CD8-positive, alpha-beta T cell (primary cell): ENCODE measurements at regions of chr17 and their contacts with region 1.

Region 1: GRCh38 chr17:42405963-42406495 is 17.0 kb downstream of the CAVIN1 start:
- DNase-seq: peak; percentile 72 to 90 (median 83)
- ATAC-seq: peak; percentile 78
- H3K4me3 ChIP-seq: no peak overlapping the region
- H3K4me3 Mint-ChIP-seq: no peak overlapping the region
- H3K27ac ChIP-seq: no peak overlapping the region
- H3K27ac Mint-ChIP-seq: no peak overlapping the region
- H3K4me1 ChIP-seq: peaks cover 14% of the 10 kb centered on the region
- H3K4me1 Mint-ChIP-seq: peaks cover 8% of the 10 kb centered on the region
- H3K27me3 ChIP-seq: no peaks in the 10 kb centered on the region
- H3K27me3 Mint-ChIP-seq: no peaks in the 10 kb centered on the region
- CTCF ChIP-seq: peak; percentile 91

Region 2: GRCh38 chr17:41919840-41920599 is 486.0 kb before region 1 on chr17:
- CTCF ChIA-PET with region 1: no interaction called
- POLR2A ChIA-PET with region 1: no interaction called
- intact Hi-C with region 1: no loop called
- DNase-seq: peak in 2 of 9 experiments; percentile 15 to 21
- ATAC-seq: no peak
- H3K4me3 ChIP-seq: no peak overlapping the region
- H3K4me3 Mint-ChIP-seq: peak overlapping the region; percentile 67
- H3K27ac ChIP-seq: no peak overlapping the region
- H3K27ac Mint-ChIP-seq: no peak overlapping the region
- H3K4me1 ChIP-seq: peaks cover 17% of the 10 kb centered on the region
- H3K4me1 Mint-ChIP-seq: peaks cover 23% of the 10 kb centered on the region
- H3K27me3 ChIP-seq: no peaks in the 10 kb centered on the region
- H3K27me3 Mint-ChIP-seq: no peaks in the 10 kb centered on the region
- CTCF ChIP-seq: no peak

Region 3: GRCh38 chr17:42153919-42154742 is 251.9 kb before region 1 on chr17:
- CTCF ChIA-PET with region 1: no interaction called
- POLR2A ChIA-PET with region 1: no interaction called
- intact Hi-C with region 1: loop called in 1 of 2 experiments (anchors 1 kb)
- DNase-seq: peak in 2 of 9 experiments; percentile 20 to 40
- ATAC-seq: no peak
- H3K4me3 ChIP-seq: peak overlapping the region; percentile 94 to 95
- H3K4me3 Mint-ChIP-seq: peak overlapping the region; percentile 98
- H3K27ac ChIP-seq: peak overlapping the region; percentile 78 to 87
- H3K27ac Mint-ChIP-seq: peak overlapping the region; percentile 95
- H3K4me1 ChIP-seq: peaks cover 24% of the 10 kb centered on the region
- H3K4me1 Mint-ChIP-seq: peaks cover 39% of the 10 kb centered on the region
- H3K27me3 ChIP-seq: no peaks in the 10 kb centered on the region
- H3K27me3 Mint-ChIP-seq: no peaks in the 10 kb centered on the region
- CTCF ChIP-seq: no peak

Region 4: DNA sequence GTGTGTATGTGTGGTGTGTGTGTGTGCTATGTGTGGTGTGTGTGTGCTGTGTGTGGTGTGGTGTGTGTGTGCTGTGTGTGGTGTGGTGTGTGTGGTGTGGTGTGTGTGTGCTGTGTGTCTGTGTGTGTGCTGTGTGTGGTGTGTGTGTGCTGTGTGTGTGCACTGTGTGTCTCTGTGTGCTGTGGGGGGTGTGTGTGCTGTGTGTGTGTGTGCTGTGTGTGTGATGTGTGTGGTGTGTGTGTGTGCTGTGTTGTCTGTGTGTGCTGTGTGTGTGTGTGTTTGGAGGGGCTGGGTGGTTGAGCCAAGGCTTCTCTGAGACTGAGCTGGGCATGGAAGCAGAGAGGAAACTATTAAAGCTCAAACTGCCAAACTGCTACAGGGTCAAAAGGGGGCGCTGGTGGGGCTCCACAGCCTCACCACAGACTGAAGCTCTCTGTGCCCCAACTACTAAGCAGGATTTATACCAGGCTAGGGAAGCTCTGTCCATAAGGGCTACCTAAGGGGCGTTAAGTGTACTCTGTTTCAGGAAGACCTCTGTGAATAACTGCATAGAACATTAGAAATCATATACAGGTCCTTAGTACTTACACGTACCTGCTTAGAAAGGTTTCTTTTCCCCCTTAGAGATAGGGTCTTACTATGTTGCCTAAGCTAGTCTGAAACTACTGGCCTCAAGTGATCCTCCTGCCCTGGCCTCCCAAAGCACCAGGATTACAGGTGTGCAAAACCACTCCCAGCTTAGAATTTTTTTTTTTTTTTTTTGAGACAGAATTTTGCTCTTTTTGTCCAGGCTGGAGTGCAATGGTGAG is 183.9 kb before region 1 on chr17:
- CTCF ChIA-PET with region 1: interaction called, 39 read pairs
- POLR2A ChIA-PET with region 1: interaction called, 4 read pairs
- intact Hi-C with region 1: loop called (anchors 1 to 2 kb)
- DNase-seq: peak; percentile 24 to 82 (median 66)
- ATAC-seq: peak; percentile 98
- H3K4me3 ChIP-seq: no peak overlapping the region
- H3K4me3 Mint-ChIP-seq: no peak overlapping the region
- H3K27ac ChIP-seq: no peak overlapping the region
- H3K27ac Mint-ChIP-seq: no peak overlapping the region
- H3K4me1 ChIP-seq: no peaks in the 10 kb centered on the region
- H3K4me1 Mint-ChIP-seq: peaks cover 5% of the 10 kb centered on the region
- H3K27me3 ChIP-seq: no peaks in the 10 kb centered on the region
- H3K27me3 Mint-ChIP-seq: no peaks in the 10 kb centered on the region
- CTCF ChIP-seq: peak; percentile 62

Region 5: GRCh38 chr17:42322382-42323267 is 83.4 kb before region 1 on chr17:
- CTCF ChIA-PET with region 1: interaction called, 672 read pairs
- POLR2A ChIA-PET with region 1: interaction called, 6 read pairs
- intact Hi-C with region 1: loop called (anchors 1 kb)
- DNase-seq: peak; percentile 89 to 98 (median 96)
- ATAC-seq: peak; percentile 97
- H3K4me3 ChIP-seq: no peak overlapping the region
- H3K4me3 Mint-ChIP-seq: no peak overlapping the region
- H3K27ac ChIP-seq: peak overlapping the region in 1 of 2 experiments; percentile 38
- H3K27ac Mint-ChIP-seq: peak overlapping the region; percentile 82
- H3K4me1 ChIP-seq: peaks cover 17% of the 10 kb centered on the region
- H3K4me1 Mint-ChIP-seq: peaks cover 40% of the 10 kb centered on the region
- H3K27me3 ChIP-seq: no peaks in the 10 kb centered on the region
- H3K27me3 Mint-ChIP-seq: no peaks in the 10 kb centered on the region
- CTCF ChIP-seq: peak; percentile 99

Region 6: DNA sequence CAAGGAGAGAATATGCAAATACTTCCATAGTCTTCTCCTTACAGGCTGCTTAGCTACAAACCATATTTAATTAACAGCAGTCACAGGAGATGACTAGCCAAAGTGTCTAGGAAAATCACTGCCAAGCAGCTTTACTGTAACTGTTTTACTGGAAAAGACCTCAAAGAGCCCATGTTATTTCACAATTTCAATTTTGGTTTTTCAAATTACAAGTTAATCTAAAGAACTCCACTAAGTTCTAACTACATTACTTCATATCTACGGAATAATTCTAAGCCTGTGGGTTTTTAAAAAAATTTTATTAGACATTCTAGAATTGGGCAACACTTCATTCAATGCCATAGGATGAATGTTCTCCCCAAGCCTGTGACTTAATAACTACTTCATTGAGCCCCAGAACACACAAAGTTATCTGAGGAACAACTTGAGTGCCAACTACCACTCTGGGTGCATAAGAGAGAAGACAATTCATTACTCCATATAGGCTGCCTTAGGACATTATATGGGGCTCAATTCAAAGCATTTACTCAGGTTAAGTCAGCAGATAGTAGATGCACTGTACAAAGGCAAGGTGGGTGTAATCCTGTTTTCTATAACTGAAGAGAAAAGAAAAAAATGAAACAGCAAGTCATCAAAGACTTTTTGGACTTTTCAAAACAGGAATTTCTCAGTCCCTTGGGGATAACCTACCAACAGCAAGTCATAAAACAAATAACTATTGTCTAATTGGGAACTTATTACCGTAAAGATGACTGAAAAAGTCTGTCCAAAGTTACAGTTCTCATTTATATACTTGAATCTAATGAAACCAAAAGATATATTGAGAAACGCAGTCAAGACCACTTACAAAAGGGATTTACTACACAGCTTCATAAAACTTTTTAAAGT is 50.8 kb before region 1 on chr17:
- CTCF ChIA-PET with region 1: interaction called, 6 read pairs
- POLR2A ChIA-PET with region 1: no interaction called
- intact Hi-C with region 1: loop called in 1 of 2 experiments (anchors 5 kb)
- DNase-seq: no peak
- ATAC-seq: no peak
- H3K4me3 ChIP-seq: no peak overlapping the region
- H3K4me3 Mint-ChIP-seq: no peak overlapping the region
- H3K27ac ChIP-seq: no peak overlapping the region
- H3K27ac Mint-ChIP-seq: no peak overlapping the region
- H3K4me1 ChIP-seq: peaks cover 15% of the 10 kb centered on the region
- H3K4me1 Mint-ChIP-seq: peaks cover 43% of the 10 kb centered on the region
- H3K27me3 ChIP-seq: no peaks in the 10 kb centered on the region
- H3K27me3 Mint-ChIP-seq: no peaks in the 10 kb centered on the region
- CTCF ChIP-seq: no peak

Region 7: DNA sequence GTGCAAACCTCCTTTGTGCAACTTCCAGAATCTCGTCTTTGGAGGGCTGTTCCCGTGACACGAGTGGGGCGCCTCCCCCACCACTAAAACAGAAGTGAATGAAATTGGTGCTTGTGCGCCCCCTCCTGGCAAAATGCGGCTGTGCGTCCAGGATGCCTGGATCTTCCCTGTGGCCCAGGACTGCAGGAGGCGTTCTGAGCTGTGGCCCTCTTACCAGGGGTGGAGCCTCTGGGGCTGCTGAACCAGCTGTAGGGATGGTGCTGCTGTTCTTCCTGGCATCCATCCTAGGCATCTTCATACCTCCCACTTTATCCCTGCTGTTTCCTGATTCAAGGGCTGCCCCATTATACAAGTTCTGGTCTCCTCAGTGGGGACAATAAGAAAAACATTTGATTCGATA is 111.5 kb after region 1 on chr17:
- CTCF ChIA-PET with region 1: interaction called, 77 read pairs
- POLR2A ChIA-PET with region 1: no interaction called
- intact Hi-C with region 1: loop called (anchors 1 kb)
- DNase-seq: peak; percentile 68 to 90 (median 84)
- ATAC-seq: peak; percentile 92
- H3K4me3 ChIP-seq: no peak overlapping the region
- H3K4me3 Mint-ChIP-seq: no peak overlapping the region
- H3K27ac ChIP-seq: no peak overlapping the region
- H3K27ac Mint-ChIP-seq: no peak overlapping the region
- H3K4me1 ChIP-seq: no peaks in the 10 kb centered on the region
- H3K4me1 Mint-ChIP-seq: peaks cover 5% of the 10 kb centered on the region
- H3K27me3 ChIP-seq: no peaks in the 10 kb centered on the region
- H3K27me3 Mint-ChIP-seq: no peaks in the 10 kb centered on the region
- CTCF ChIP-seq: peak; percentile 96

Region 8: GRCh38 chr17:42541041-42541833 is 135.2 kb after region 1 on chr17:
- CTCF ChIA-PET with region 1: no interaction called
- POLR2A ChIA-PET with region 1: no interaction called
- intact Hi-C with region 1: no loop called
- DNase-seq: peak in 4 of 9 experiments; percentile 41 to 66 (median 52)
- ATAC-seq: peak; percentile 50
- H3K4me3 ChIP-seq: no peak overlapping the region
- H3K4me3 Mint-ChIP-seq: peak overlapping the region; percentile 42
- H3K27ac ChIP-seq: no peak overlapping the region
- H3K27ac Mint-ChIP-seq: peak overlapping the region; percentile 56
- H3K4me1 ChIP-seq: peaks cover 35% of the 10 kb centered on the region
- H3K4me1 Mint-ChIP-seq: peaks cover 30% of the 10 kb centered on the region
- H3K27me3 ChIP-seq: no peaks in the 10 kb centered on the region
- H3K27me3 Mint-ChIP-seq: no peaks in the 10 kb centered on the region
- CTCF ChIP-seq: no peak

Region 9: DNA sequence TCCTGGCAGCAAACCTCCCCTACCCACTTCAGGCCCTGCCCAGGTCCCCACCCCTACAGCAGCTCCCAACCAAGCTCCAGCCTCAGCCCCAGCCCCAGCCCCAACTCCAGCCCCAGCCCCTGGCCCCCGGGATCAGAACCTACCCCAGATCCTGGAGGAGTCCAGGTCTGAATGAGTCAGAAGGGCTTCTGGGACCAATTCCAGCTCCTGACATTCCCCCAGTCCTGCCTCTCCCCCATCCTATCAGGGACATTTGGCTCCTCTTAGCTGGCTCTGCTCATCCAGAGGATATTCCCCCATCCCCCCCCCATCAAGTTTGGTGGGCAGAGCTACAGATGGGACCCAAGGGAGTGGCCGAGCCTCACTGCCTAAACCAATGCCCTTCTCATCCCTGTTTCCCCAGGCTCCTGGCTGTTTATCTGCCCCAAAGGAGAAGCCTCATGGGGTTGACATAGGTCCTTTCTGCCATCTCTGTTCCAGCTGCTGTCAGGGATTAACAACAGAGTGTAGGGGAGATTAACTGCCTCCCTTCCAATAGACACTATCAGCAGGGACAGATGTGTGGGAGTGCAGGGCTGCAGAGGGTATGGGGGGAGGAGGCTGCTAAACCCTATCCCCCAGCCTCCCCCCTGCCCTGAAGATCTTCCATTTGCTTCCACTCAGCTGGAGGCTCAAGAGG is 292.8 kb after region 1 on chr17:
- CTCF ChIA-PET with region 1: no interaction called
- POLR2A ChIA-PET with region 1: no interaction called
- intact Hi-C with region 1: no loop called
- DNase-seq: no peak
- ATAC-seq: no peak
- H3K4me3 ChIP-seq: no peak overlapping the region
- H3K4me3 Mint-ChIP-seq: no peak overlapping the region
- H3K27ac ChIP-seq: no peak overlapping the region
- H3K27ac Mint-ChIP-seq: no peak overlapping the region
- H3K4me1 ChIP-seq: no peaks in the 10 kb centered on the region
- H3K4me1 Mint-ChIP-seq: no peaks in the 10 kb centered on the region
- H3K27me3 ChIP-seq: no peaks in the 10 kb centered on the region
- H3K27me3 Mint-ChIP-seq: no peaks in the 10 kb centered on the region
- CTCF ChIP-seq: no peak